ENCODE measurements at regions of chr7 and their contacts with region 1.

Region 1: GRCh38 chr7:17646253-17646956 is 293.9 kb downstream of the SNX13 start:
- DNase-seq: no peak
- H3K4me3 ChIP-seq: no peak overlapping the region
- H3K4me3 Mint-ChIP-seq: no peak overlapping the region
- H3K27ac Mint-ChIP-seq: no peak overlapping the region
- H3K4me1 ChIP-seq: no peaks in the 10 kb centered on the region
- H3K4me1 Mint-ChIP-seq: no peaks in the 10 kb centered on the region
- H3K27me3 ChIP-seq: no peaks in the 10 kb centered on the region
- H3K27me3 Mint-ChIP-seq: no peaks in the 10 kb centered on the region
- CTCF ChIP-seq: peak in 1 of 2 experiments; percentile 42

Region 2: DNA sequence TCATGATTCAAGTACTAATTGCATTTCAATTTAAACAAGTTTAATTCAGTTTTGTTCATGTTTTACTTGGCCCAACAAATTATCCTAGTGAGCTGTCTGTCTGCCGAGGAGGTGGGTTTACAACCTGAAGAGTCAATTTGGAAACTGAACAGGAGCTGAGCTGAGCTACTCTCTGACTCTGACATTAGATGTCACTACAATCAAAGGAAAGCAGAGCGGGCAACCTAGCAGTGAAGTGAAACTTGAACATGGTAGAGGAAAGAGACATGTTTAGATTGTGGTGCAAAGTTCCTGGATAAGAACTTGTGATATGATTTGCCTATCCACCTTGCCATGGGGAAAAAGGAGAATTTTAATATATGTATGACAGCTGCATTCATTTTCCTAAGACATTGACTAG is 755.1 kb before region 1 on chr7:
- CTCF ChIA-PET with region 1: interaction called, 5 read pairs
- POLR2A ChIA-PET with region 1: no interaction called
- intact Hi-C with region 1: loop called (anchors 1 kb)
- DNase-seq: peak; percentile 64 to 74
- H3K4me3 ChIP-seq: no peak overlapping the region
- H3K4me3 Mint-ChIP-seq: no peak overlapping the region
- H3K27ac Mint-ChIP-seq: peak overlapping the region; percentile 35
- H3K4me1 ChIP-seq: peaks cover 31% of the 10 kb centered on the region
- H3K4me1 Mint-ChIP-seq: peaks cover 14% of the 10 kb centered on the region
- H3K27me3 ChIP-seq: no peaks in the 10 kb centered on the region
- H3K27me3 Mint-ChIP-seq: no peaks in the 10 kb centered on the region
- CTCF ChIP-seq: peak; percentile 46 to 75

Region 3: DNA sequence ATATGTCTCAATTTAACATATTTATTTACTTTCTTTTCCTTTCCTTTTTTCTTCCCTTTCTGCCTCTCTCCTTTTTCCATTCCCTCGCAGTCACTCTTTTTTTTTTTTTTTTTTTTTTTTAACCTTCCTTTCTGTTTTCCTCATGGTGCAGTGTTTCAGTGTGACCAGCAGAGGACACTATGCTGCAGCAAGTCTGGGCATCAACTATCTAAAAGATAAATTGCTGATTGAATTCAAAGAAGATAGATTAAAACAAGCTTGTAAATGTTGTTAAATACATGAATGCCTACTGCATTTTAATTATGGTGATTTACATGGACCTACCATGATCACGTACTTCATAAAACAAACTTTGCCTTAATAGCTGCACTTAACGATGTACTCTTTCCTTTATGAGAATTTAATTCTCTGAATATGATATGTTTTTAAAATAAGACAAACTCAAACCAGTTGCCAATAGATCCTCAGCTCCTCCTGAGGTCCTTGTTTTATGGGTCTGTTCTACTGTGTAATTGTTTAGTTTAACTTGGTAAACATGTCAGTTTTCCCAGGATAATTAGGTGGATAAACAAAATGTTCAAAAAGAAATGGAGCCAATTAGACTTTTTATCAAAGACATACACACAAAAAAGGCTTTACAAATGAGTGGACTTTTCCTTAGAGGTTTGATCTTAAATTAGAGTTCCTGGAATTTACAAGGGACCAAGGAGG is 663.6 kb before region 1 on chr7:
- CTCF ChIA-PET with region 1: no interaction called
- POLR2A ChIA-PET with region 1: no interaction called
- intact Hi-C with region 1: loop called (anchors 1 kb)
- DNase-seq: peak in 1 of 2 experiments; percentile 38
- H3K4me3 ChIP-seq: no peak overlapping the region
- H3K4me3 Mint-ChIP-seq: no peak overlapping the region
- H3K27ac Mint-ChIP-seq: peak overlapping the region; percentile 65
- H3K4me1 ChIP-seq: no peaks in the 10 kb centered on the region
- H3K4me1 Mint-ChIP-seq: peaks cover 17% of the 10 kb centered on the region
- H3K27me3 ChIP-seq: no peaks in the 10 kb centered on the region
- H3K27me3 Mint-ChIP-seq: no peaks in the 10 kb centered on the region
- CTCF ChIP-seq: peak; percentile 90 to 96

Region 4: GRCh38 chr7:17009007-17009719 is 637.2 kb before region 1 on chr7:
- CTCF ChIA-PET with region 1: no interaction called
- POLR2A ChIA-PET with region 1: no interaction called
- intact Hi-C with region 1: loop called (anchors 1 kb)
- DNase-seq: no peak
- H3K4me3 ChIP-seq: no peak overlapping the region
- H3K4me3 Mint-ChIP-seq: no peak overlapping the region
- H3K27ac Mint-ChIP-seq: no peak overlapping the region
- H3K4me1 ChIP-seq: no peaks in the 10 kb centered on the region
- H3K4me1 Mint-ChIP-seq: no peaks in the 10 kb centered on the region
- H3K27me3 ChIP-seq: no peaks in the 10 kb centered on the region
- H3K27me3 Mint-ChIP-seq: no peaks in the 10 kb centered on the region
- CTCF ChIP-seq: peak; percentile 15 to 49

Region 5: GRCh38 chr7:17474724-17475344 is 171.6 kb before region 1 on chr7:
- CTCF ChIA-PET with region 1: interaction called, 3 read pairs
- POLR2A ChIA-PET with region 1: no interaction called
- intact Hi-C with region 1: loop called (anchors 1 kb)
- DNase-seq: peak in 1 of 2 experiments; percentile 28
- H3K4me3 ChIP-seq: no peak overlapping the region
- H3K4me3 Mint-ChIP-seq: no peak overlapping the region
- H3K27ac Mint-ChIP-seq: no peak overlapping the region
- H3K4me1 ChIP-seq: no peaks in the 10 kb centered on the region
- H3K4me1 Mint-ChIP-seq: no peaks in the 10 kb centered on the region
- H3K27me3 ChIP-seq: no peaks in the 10 kb centered on the region
- H3K27me3 Mint-ChIP-seq: no peaks in the 10 kb centered on the region
- CTCF ChIP-seq: peak; percentile 31 to 32

Region 6: GRCh38 chr7:17548014-17548653 is 98.3 kb before region 1 on chr7:
- CTCF ChIA-PET with region 1: no interaction called
- POLR2A ChIA-PET with region 1: no interaction called
- intact Hi-C with region 1: loop called (anchors 1 kb)
- DNase-seq: peak in 1 of 2 experiments; percentile 22
- H3K4me3 ChIP-seq: no peak overlapping the region
- H3K4me3 Mint-ChIP-seq: no peak overlapping the region
- H3K27ac Mint-ChIP-seq: no peak overlapping the region
- H3K4me1 ChIP-seq: 0 out of 2 replicates have a peak, but pooled peaks cover under 1% of the 10 kb centered on the region
- H3K4me1 Mint-ChIP-seq: peaks cover 12% of the 10 kb centered on the region
- H3K27me3 ChIP-seq: no peaks in the 10 kb centered on the region
- H3K27me3 Mint-ChIP-seq: no peaks in the 10 kb centered on the region
- CTCF ChIP-seq: peak; percentile 7 to 43

Region 7: GRCh38 chr7:17618652-17618974 is 27.8 kb before region 1 on chr7:
- CTCF ChIA-PET with region 1: no interaction called
- POLR2A ChIA-PET with region 1: no interaction called
- intact Hi-C with region 1: loop called (anchors 1 kb)
- DNase-seq: peak; percentile 66 to 80
- H3K4me3 ChIP-seq: peak overlapping the region; percentile 9; the same call in 1 of the 2 replicates
- H3K4me3 Mint-ChIP-seq: peak overlapping the region; percentile 67
- H3K27ac Mint-ChIP-seq: peak overlapping the region; percentile 83
- H3K4me1 ChIP-seq: peaks cover 35% of the 10 kb centered on the region
- H3K4me1 Mint-ChIP-seq: peaks cover 19% of the 10 kb centered on the region
- H3K27me3 ChIP-seq: no peaks in the 10 kb centered on the region
- H3K27me3 Mint-ChIP-seq: no peaks in the 10 kb centered on the region
- CTCF ChIP-seq: no peak

Region 8: GRCh38 chr7:17709127-17709526 is 62.7 kb after region 1 on chr7:
- CTCF ChIA-PET with region 1: no interaction called
- POLR2A ChIA-PET with region 1: no interaction called
- intact Hi-C with region 1: no loop called
- DNase-seq: no peak
- H3K4me3 ChIP-seq: no peak overlapping the region
- H3K4me3 Mint-ChIP-seq: no peak overlapping the region
- H3K27ac Mint-ChIP-seq: no peak overlapping the region
- H3K4me1 ChIP-seq: no peaks in the 10 kb centered on the region
- H3K4me1 Mint-ChIP-seq: no peaks in the 10 kb centered on the region
- H3K27me3 ChIP-seq: peaks cover 1% of the 10 kb centered on the region; the same call in 1 of the 2 replicates
- H3K27me3 Mint-ChIP-seq: peaks cover 2% of the 10 kb centered on the region
- CTCF ChIP-seq: no peak